Activated naive CD4-positive, alpha-beta T cell treated with anti-CD3 and anti-CD28 coated beads for 36 hours (primary cell): ENCODE measurements at regions of chr15 and their contacts with region 1.

Region 1: GRCh38 chr15:60932051-60932915 is 296.8 kb downstream of the RORA start:
- DNase-seq: peak; percentile 71
- H3K4me3 Mint-ChIP-seq: no peak overlapping the region
- H3K27ac Mint-ChIP-seq: no peak overlapping the region
- H3K4me1 Mint-ChIP-seq: peaks cover 12% of the 10 kb centered on the region
- H3K27me3 Mint-ChIP-seq: peaks cover 10% of the 10 kb centered on the region

Region 2: GRCh38 chr15:60389261-60390077 is 542.8 kb before region 1 on chr15:
- CTCF ChIA-PET with region 1: no interaction called
- intact Hi-C with region 1: loop called (anchors 1 kb)
- DNase-seq: peak; percentile 60
- H3K4me3 Mint-ChIP-seq: peak overlapping the region; percentile 13
- H3K27ac Mint-ChIP-seq: no peak overlapping the region
- H3K4me1 Mint-ChIP-seq: peaks cover 23% of the 10 kb centered on the region
- H3K27me3 Mint-ChIP-seq: peaks cover 6% of the 10 kb centered on the region

Region 3: GRCh38 chr15:61175024-61175423 is 242.7 kb after region 1 on chr15:
- CTCF ChIA-PET with region 1: no interaction called
- intact Hi-C with region 1: no loop called
- DNase-seq: no peak
- H3K4me3 Mint-ChIP-seq: no peak overlapping the region
- H3K27ac Mint-ChIP-seq: no peak overlapping the region
- H3K4me1 Mint-ChIP-seq: peaks cover 4% of the 10 kb centered on the region
- H3K27me3 Mint-ChIP-seq: peaks cover 5% of the 10 kb centered on the region